B cell (primary cell): ENCODE measurements at regions of chr9 and their contacts with region 1.

Region 1: GRCh38 chr9:131046581-131047202 is 37.7 kb downstream of the LAMC3 start:
- DNase-seq: peak; percentile 83
- ATAC-seq: peak; percentile 84
- H3K4me3 ChIP-seq: no peak overlapping the region
- H3K4me3 Mint-ChIP-seq: peak overlapping the region; percentile 26
- H3K27ac ChIP-seq: no peak overlapping the region
- H3K27ac Mint-ChIP-seq: no peak overlapping the region
- H3K4me1 ChIP-seq: peaks cover 17 to 34% of the 10 kb centered on the region in 2 donors
- H3K4me1 Mint-ChIP-seq: peaks cover 16% of the 10 kb centered on the region
- H3K27me3 ChIP-seq: peaks cover 0 to 5% (median 0%) of the 10 kb centered on the region in 4 experiments
- H3K27me3 Mint-ChIP-seq: peaks cover 7% of the 10 kb centered on the region
- CTCF ChIP-seq: peak; percentile 99

Region 2: DNA sequence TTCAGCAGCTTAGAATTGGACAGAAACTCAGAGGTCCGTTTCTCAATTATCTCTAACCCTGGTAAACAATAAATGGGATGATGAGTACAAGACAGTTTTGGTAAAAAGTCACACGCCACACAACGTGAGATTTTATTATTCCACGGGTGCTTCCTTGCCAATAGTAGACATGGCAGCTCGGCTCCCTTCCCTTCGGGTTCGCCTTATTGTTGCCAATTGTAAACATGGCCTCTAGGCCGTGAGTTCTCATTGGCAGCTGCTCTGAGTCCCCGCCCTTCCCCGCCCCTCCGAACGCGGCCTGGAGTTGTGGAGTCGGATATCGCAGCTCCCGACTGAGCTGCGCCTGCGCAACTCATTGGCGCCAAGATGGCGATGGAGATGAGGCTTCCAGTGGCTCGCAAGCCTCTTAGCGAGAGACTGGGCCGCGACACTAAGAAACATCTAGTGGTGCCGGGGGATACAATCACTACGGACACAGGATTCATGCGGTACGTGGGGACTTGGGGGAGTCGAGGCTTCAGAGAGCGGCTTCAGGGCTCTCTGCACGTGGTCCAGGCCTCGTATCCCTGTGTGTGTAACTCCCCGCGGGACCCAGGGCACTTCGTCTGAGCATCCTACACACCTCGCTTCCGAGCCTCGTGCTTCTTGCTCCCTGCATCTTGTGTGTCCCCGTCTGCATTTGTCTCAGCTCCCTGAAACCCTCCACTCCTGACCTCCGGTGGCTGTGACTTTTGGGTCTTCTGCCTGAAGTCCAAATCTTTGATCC is 353.1 kb before region 1 on chr9 and contains the start of gene EXOSC2:
- CTCF ChIA-PET with region 1: interaction called, 11 read pairs
- POLR2A ChIA-PET with region 1: interaction called, 3 read pairs
- intact Hi-C with region 1: no loop called
- DNase-seq: peak; percentile 97
- ATAC-seq: peak; percentile 100
- H3K4me3 ChIP-seq: peak within 1 kb of the TSS; percentile 70 to 97 (median 74)
- H3K4me3 Mint-ChIP-seq: peak within 1 kb of the TSS; percentile 98
- H3K27ac ChIP-seq: peak within 1 kb of the TSS; percentile 8 to 68
- H3K27ac Mint-ChIP-seq: peak within 1 kb of the TSS; percentile 95
- H3K4me1 ChIP-seq: peaks cover 18 to 19% of the 10 kb centered on the region in 2 donors
- H3K4me1 Mint-ChIP-seq: peaks cover 40% of the 10 kb centered on the region
- H3K27me3 ChIP-seq: no peaks in the 10 kb centered on the region
- H3K27me3 Mint-ChIP-seq: no peaks in the 10 kb centered on the region
- CTCF ChIP-seq: no peak
- total RNA-seq, gene EXOSC2: 53.3 and 55.5 TPM in 2 replicates

Region 3: DNA sequence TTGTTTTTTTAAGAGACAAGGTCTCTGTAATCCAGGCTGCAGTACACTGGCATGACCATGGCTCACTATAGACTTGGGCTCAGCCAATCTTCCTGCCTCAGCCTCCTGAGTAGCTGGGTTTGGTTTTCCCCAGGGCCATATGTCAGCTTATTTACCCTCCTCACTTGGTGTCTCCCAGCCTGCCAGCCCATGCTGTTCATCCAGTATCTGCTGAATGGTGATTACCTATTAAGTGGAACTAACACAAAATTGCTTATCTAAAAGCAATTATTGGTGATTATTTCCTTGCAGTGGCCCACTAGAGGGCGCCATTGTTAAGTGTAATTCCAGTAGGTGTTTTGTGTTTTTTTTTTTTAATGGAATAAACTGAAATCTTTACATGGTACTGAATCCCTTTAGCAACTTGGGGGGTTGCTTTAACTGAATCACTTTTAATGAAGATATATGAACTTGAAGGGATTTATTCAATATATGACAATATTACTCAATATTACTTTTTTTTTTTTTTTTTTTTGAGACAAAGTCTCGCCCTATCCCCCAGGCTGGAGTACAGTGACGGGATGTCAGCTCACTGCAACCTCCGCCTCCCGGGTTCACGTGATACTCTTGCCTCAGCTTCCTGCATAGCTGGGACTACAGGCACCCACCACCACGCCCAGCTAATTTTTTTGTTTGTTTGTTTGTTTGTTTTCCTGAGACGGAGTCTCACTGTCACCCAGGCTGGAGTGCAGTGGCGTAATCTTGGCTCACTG is 339.3 kb before region 1 on chr9:
- CTCF ChIA-PET with region 1: interaction called, 30 read pairs
- POLR2A ChIA-PET with region 1: no interaction called
- intact Hi-C with region 1: loop called (anchors 1 kb)
- DNase-seq: peak; percentile 79
- ATAC-seq: no peak
- H3K4me3 ChIP-seq: no peak overlapping the region
- H3K4me3 Mint-ChIP-seq: no peak overlapping the region
- H3K27ac ChIP-seq: no peak overlapping the region
- H3K27ac Mint-ChIP-seq: no peak overlapping the region
- H3K4me1 ChIP-seq: peaks cover 0 to 5% of the 10 kb centered on the region in 2 donors
- H3K4me1 Mint-ChIP-seq: peaks cover 1% of the 10 kb centered on the region
- H3K27me3 ChIP-seq: no peaks in the 10 kb centered on the region
- H3K27me3 Mint-ChIP-seq: no peaks in the 10 kb centered on the region
- CTCF ChIP-seq: peak; percentile 85

Region 4: GRCh38 chr9:130770679-130771442 is 275.8 kb before region 1 on chr9:
- CTCF ChIA-PET with region 1: interaction called, 10 read pairs
- POLR2A ChIA-PET with region 1: no interaction called
- intact Hi-C with region 1: loop called (anchors 2 kb)
- DNase-seq: peak; percentile 50
- ATAC-seq: no peak
- H3K4me3 ChIP-seq: no peak overlapping the region
- H3K4me3 Mint-ChIP-seq: no peak overlapping the region
- H3K27ac ChIP-seq: no peak overlapping the region
- H3K27ac Mint-ChIP-seq: no peak overlapping the region
- H3K4me1 ChIP-seq: peaks cover 15 to 22% of the 10 kb centered on the region in 2 donors
- H3K4me1 Mint-ChIP-seq: peaks cover 37% of the 10 kb centered on the region
- H3K27me3 ChIP-seq: no peaks in the 10 kb centered on the region
- H3K27me3 Mint-ChIP-seq: no peaks in the 10 kb centered on the region
- CTCF ChIP-seq: peak; percentile 69

Region 5: DNA sequence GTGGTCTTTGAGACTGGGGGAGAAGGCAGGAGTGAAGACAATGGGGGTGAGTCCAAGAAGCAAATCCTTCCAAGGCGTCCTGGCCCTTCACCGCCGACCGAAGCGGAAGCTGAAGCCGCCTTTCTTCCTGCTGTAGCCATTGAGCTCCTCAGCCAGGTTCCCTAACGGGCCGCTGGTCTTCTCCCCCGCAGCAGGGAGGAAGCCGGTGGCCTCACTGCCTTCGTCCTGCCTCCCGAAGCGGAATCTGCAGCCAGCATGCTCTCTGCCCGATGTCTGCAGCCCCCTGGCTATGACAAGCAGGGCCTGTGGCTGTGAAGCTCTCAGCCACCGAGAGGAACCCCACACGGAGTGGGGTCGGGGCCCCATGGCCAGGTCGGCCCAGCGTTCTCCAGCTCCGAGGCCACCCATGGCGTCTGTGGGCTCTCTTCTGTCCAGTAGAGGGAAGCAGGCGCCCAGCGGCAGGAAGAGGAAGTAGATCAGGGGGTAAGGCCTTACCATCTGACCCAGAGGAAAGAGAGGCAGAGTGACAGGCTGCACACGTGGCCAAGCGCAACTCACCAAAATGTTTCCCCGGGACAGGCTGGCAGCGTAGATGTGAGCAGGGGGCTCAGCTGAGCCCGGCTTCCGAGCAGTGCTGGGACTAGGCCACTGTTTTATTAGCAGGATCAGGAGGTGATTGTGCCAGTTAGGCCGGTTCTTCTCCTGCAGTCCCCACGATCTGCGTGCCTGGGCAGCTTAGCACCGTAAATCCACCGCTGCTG is 153.2 kb before region 1 on chr9:
- CTCF ChIA-PET with region 1: interaction called, 12 read pairs
- POLR2A ChIA-PET with region 1: no interaction called
- intact Hi-C with region 1: no loop called
- DNase-seq: peak; percentile 34
- ATAC-seq: peak; percentile 47
- H3K4me3 ChIP-seq: peak overlapping the region in 1 of 5 experiments; percentile 9
- H3K4me3 Mint-ChIP-seq: peak overlapping the region; percentile 50
- H3K27ac ChIP-seq: no peak overlapping the region
- H3K27ac Mint-ChIP-seq: no peak overlapping the region
- H3K4me1 ChIP-seq: peaks cover 0 to 10% of the 10 kb centered on the region in 2 donors
- H3K4me1 Mint-ChIP-seq: peaks cover 6% of the 10 kb centered on the region
- H3K27me3 ChIP-seq: no peaks in the 10 kb centered on the region
- H3K27me3 Mint-ChIP-seq: no peaks in the 10 kb centered on the region
- CTCF ChIP-seq: no peak

Region 6: GRCh38 chr9:130965680-130966079 is 81.0 kb before region 1 on chr9:
- CTCF ChIA-PET with region 1: no interaction called
- POLR2A ChIA-PET with region 1: no interaction called
- intact Hi-C with region 1: no loop called
- DNase-seq: no peak
- ATAC-seq: no peak
- H3K4me3 ChIP-seq: no peak overlapping the region
- H3K4me3 Mint-ChIP-seq: no peak overlapping the region
- H3K27ac ChIP-seq: no peak overlapping the region
- H3K27ac Mint-ChIP-seq: no peak overlapping the region
- H3K4me1 ChIP-seq: no peaks in the 10 kb centered on the region
- H3K4me1 Mint-ChIP-seq: no peaks in the 10 kb centered on the region
- H3K27me3 ChIP-seq: peaks cover 0 to 4% (median 0%) of the 10 kb centered on the region in 4 experiments
- H3K27me3 Mint-ChIP-seq: peaks cover 15% of the 10 kb centered on the region
- CTCF ChIP-seq: no peak

Region 7: DNA sequence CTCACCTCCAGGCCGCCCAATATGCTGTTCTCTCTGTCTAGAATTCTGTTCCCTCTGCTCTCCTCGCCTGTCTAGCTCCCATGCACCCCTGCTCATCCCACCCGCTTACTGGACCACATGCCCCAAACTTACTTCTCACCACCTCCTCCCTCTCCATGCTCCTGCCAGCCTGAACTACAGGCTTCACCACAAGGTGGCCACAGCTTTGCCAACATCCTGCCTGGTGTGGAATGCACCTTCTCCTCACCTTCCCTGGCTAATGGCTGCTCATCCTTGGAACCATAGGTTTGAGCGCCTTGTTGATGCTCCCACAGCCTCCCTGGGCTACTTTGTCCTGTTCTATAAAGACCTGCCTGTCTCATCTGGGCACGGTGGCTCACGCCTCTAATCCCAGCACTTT is 28.1 kb before region 1 on chr9:
- CTCF ChIA-PET with region 1: interaction called, 12 read pairs
- POLR2A ChIA-PET with region 1: no interaction called
- intact Hi-C with region 1: no loop called
- DNase-seq: no peak
- ATAC-seq: no peak
- H3K4me3 ChIP-seq: no peak overlapping the region
- H3K4me3 Mint-ChIP-seq: no peak overlapping the region
- H3K27ac ChIP-seq: no peak overlapping the region
- H3K27ac Mint-ChIP-seq: no peak overlapping the region
- H3K4me1 ChIP-seq: no peaks in the 10 kb centered on the region
- H3K4me1 Mint-ChIP-seq: no peaks in the 10 kb centered on the region
- H3K27me3 ChIP-seq: peaks cover 0 to 3% (median 0%) of the 10 kb centered on the region in 4 experiments
- H3K27me3 Mint-ChIP-seq: peaks cover 15% of the 10 kb centered on the region
- CTCF ChIP-seq: no peak

Region 8: DNA sequence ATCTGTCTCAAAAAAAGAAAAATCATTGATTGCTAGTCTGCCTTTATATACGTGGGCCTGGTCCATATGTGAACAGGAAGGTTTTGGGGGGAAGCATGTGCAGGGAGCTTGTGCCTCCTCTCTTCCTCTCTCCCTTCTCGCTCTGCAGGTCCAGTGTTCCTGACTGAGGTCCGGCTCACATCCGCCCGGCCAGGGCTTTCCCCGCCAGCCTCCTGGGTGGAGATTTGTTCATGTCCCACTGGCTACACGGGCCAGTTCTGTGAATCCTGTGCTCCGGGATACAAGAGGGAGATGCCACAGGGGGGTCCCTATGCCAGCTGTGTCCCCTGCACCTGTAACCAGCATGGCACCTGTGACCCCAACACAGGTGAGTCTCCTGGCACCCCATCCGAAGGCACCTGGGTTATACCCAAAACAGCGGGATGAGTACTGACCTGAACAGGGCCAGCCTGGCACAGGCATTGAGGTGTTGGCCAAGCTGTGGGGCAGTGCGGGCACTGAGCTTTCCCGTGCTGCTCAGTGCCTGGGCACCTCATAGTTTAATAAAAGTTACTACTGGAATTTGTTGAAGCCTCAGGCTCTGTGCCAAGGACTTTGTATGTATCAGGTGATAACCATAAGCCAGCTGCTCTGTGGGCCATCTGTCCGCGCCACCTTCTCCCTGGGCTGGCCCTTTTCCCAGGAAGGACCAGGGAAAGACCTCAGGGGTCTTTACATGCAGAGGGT is 10.3 kb after region 1 on chr9:
- CTCF ChIA-PET with region 1: interaction called, 34 read pairs
- POLR2A ChIA-PET with region 1: no interaction called
- intact Hi-C with region 1: no loop called
- DNase-seq: no peak
- ATAC-seq: no peak
- H3K4me3 ChIP-seq: no peak overlapping the region
- H3K4me3 Mint-ChIP-seq: no peak overlapping the region
- H3K27ac ChIP-seq: no peak overlapping the region
- H3K27ac Mint-ChIP-seq: no peak overlapping the region
- H3K4me1 ChIP-seq: peaks cover 0 to 3% of the 10 kb centered on the region in 2 donors
- H3K4me1 Mint-ChIP-seq: no peaks in the 10 kb centered on the region
- H3K27me3 ChIP-seq: peaks cover 0 to 2% (median 0%) of the 10 kb centered on the region in 4 experiments
- H3K27me3 Mint-ChIP-seq: peaks cover 4% of the 10 kb centered on the region
- CTCF ChIP-seq: no peak

Region 9: GRCh38 chr9:131096269-131097125 is 49.8 kb after region 1 on chr9 and contains the start of gene AIF1L:
- CTCF ChIA-PET with region 1: no interaction called
- POLR2A ChIA-PET with region 1: no interaction called
- intact Hi-C with region 1: no loop called
- DNase-seq: peak; percentile 25
- ATAC-seq: no peak
- H3K4me3 ChIP-seq: peak within 1 kb of the TSS in 1 of 5 experiments; percentile 31
- H3K4me3 Mint-ChIP-seq: peak within 1 kb of the TSS; percentile 80
- H3K27ac ChIP-seq: no peak within 1 kb of the TSS
- H3K27ac Mint-ChIP-seq: no peak within 1 kb of the TSS
- H3K4me1 ChIP-seq: peaks cover 5 to 11% of the 10 kb centered on the region in 2 donors
- H3K4me1 Mint-ChIP-seq: peaks cover 12% of the 10 kb centered on the region
- H3K27me3 ChIP-seq: peaks cover 0 to 41% (median 16%) of the 10 kb centered on the region in 4 experiments
- H3K27me3 Mint-ChIP-seq: peaks cover 31% of the 10 kb centered on the region
- CTCF ChIP-seq: no peak
- total RNA-seq, gene AIF1L: not detected in 2 replicates